K562 (cell line): ENCODE measurements at regions of chr1 and their contacts with region 1.

Region 1: DNA sequence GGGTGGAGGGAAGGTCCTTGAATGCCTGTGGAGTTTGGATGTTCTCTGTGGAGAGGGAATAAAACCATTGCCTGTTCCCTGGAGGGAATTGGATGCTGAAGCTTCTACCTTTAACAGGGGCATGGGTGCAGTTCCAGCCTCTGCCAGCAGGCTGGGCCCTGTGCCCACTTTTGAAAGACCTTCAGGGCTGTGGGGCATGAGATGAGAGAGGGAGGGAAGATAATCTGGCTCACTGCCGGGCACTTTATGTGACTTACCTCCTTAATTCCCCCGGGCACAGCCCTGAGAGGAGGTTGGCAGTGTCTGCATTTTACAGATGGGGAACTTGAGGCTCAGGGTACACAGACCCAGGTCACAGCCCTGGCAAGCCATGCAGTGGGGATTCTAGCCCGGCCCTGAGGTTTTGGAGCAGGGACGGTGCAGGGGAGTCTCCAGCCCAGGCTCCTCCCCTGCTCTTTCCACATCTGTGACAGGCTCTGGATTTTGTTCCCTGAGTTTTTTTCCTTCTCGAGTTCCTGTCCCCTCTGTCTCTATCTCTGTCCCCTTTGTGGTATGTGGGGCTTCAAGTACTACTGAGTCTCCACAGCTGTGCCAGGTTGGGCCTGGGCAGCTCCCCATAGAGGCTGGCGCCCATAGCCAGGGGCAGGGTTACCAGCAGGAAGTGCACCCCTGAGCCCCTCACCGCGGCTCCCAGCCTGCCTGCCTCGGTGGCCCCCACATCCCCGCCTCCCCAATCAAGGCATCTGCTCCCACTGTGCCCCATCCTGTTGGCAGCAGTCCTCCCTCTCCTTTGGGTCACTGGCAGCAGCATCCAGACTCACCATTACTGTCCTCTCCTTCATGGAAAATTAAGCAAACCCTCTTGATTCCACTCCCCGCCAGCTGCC is 14.0 kb upstream of the THEMIS2 start:
- DNase-seq: peak; percentile 69 to 90 (median 76)
- ATAC-seq: peak; percentile 92
- H3K4me3 ChIP-seq: no peak overlapping the region
- H3K27ac ChIP-seq: no peak overlapping the region
- H3K4me1 ChIP-seq: peaks cover 8 to 23% of the 10 kb centered on the region in 2 experiments; a peak in 4 of 5 replicates
- H3K27me3 ChIP-seq: no peaks in the 10 kb centered on the region
- CTCF ChIP-seq: peak; percentile 94 to 100 (median 99)
- EP300 ChIP-seq: peak; percentile 54; the same call in 1 of the 2 replicates
- POLR2A ChIP-seq: no peak
- RAD21 ChIP-seq: peak; percentile 98 to 99

Region 2: DNA sequence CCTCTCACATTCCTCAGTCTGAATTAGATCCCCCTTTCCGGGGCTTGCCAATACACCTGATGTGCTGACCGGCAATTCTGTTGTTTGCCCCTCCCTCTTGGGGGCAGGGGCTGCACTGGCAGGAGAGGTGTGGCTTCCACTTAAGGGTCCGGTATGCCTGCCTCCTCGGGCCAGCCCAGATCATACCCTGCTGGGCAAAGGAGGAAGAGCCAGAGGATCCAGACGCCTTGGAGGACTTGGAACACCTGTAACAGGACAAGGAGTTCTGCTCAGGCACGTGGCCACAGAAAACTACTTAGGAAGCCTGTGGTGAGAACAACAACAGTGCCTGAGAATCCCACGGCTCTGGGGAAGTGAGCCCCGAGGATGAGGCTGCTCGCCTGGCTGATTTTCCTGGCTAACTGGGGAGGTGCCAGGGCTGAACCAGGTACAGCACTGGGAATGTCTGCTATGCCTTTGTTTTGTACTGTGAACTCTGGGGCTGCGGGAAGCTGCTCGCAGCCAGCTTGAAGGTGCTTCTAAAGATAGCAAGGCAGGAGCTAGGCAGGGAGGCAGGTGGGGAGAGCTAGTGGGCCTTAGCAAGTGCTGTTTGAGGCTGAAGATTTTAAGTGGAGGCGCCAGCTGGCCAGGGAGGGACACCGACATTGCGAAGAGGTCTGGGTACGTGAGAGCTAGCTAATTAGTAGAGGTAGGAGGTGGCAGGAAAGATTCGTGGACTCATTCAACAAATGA is 76.7 kb after region 1 on chr1 and contains the start of gene SMPDL3B:
- CTCF ChIA-PET with region 1: no interaction called
- POLR2A ChIA-PET with region 1: no interaction called
- in situ Hi-C with region 1: no loop called
- intact Hi-C with region 1: loop called (anchors 5 kb)
- DNase-seq: peak in 3 of 4 experiments; percentile 52 to 60 (median 57)
- ATAC-seq: peak; percentile 76
- H3K4me3 ChIP-seq: peak within 1 kb of the TSS; percentile 3; the same call in 1 of the 2 replicates
- H3K27ac ChIP-seq: no peak within 1 kb of the TSS
- H3K4me1 ChIP-seq: peaks cover 8 to 18% of the 10 kb centered on the region in 2 experiments
- H3K27me3 ChIP-seq: no peaks in the 10 kb centered on the region
- CTCF ChIP-seq: no peak
- EP300 ChIP-seq: no peak
- POLR2A ChIP-seq: no peak
- RAD21 ChIP-seq: no peak
- polyA plus RNA-seq, gene SMPDL3B: 0.10 to 0.41 TPM

Region 3: GRCh38 chr1:27979151-27979858 is 121.0 kb after region 1 on chr1:
- CTCF ChIA-PET with region 1: interaction called, 44 read pairs
- POLR2A ChIA-PET with region 1: no interaction called
- in situ Hi-C with region 1: no loop called
- intact Hi-C with region 1: loop called (anchors 1 kb)
- DNase-seq: peak; percentile 67 to 90 (median 79)
- ATAC-seq: peak; percentile 93
- H3K4me3 ChIP-seq: no peak overlapping the region
- H3K27ac ChIP-seq: peak overlapping the region; percentile 81
- H3K4me1 ChIP-seq: peaks cover 5 to 18% of the 10 kb centered on the region in 2 experiments; a peak in 4 of 5 replicates
- H3K27me3 ChIP-seq: no peaks in the 10 kb centered on the region
- CTCF ChIP-seq: peak; percentile 66 to 96 (median 73); a peak in 5 of 6 replicates
- EP300 ChIP-seq: peak; percentile 95
- POLR2A ChIP-seq: no peak
- RAD21 ChIP-seq: peak; percentile 94 to 96

Region 4: DNA sequence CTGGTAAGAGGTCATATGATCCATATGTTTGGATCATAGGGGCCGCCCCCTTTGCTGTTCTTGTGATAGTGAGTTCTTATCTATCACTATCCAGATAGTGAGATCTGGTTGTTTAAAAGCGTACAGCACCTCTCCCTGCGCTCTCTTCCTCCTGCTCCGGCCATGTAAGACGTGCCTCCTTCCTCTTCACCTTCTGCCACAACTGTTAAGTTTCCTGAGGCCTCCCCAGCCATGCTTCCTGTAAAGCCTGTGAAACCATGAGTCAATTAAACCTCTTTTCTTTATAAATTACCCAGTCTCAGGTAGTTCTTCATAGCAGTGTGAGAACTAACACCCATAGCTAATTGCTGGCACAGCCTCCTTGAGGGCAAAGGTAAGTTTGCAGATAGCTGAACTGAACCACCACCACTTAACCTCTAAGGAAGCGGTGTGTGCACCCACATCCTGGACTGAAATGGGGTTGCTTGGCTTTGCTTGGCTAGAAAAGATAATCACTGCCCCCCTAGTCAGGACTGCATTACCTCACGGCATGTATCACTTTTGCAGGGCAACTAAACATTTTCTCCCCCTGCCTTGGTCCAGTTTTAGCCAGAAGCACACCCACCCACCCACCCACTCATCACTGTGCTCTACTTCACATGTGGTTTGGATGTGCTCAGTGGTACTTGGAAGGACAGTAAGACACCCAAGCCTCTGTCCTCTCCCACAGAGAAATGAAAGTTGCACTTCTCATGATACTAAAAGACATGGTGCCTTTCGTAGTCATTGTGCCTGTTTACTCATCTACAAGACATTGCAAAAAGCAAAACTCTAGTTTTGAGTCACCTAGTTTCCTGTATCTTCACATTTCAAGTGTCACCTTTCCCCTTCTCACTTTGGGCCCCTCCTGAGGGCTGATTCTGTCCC is 341.3 kb after region 1 on chr1:
- CTCF ChIA-PET with region 1: no interaction called
- POLR2A ChIA-PET with region 1: no interaction called
- in situ Hi-C with region 1: loop called (anchors 10 kb)
- intact Hi-C with region 1: no loop called
- DNase-seq: peak in 1 of 4 experiments; percentile 10
- ATAC-seq: no peak
- H3K4me3 ChIP-seq: no peak overlapping the region
- H3K27ac ChIP-seq: no peak overlapping the region
- H3K4me1 ChIP-seq: peaks cover 10 to 15% of the 10 kb centered on the region in 2 experiments; a peak in 4 of 5 replicates
- H3K27me3 ChIP-seq: no peaks in the 10 kb centered on the region
- CTCF ChIP-seq: no peak
- EP300 ChIP-seq: no peak
- POLR2A ChIP-seq: no peak
- RAD21 ChIP-seq: no peak

Region 5: GRCh38 chr1:28877132-28877781 is 1018.9 kb after region 1 on chr1:
- CTCF ChIA-PET with region 1: no interaction called
- POLR2A ChIA-PET with region 1: no interaction called
- in situ Hi-C with region 1: no loop called
- intact Hi-C with region 1: loop called (anchors 5 kb)
- DNase-seq: peak; percentile 81 to 92 (median 82)
- ATAC-seq: peak; percentile 85
- H3K4me3 ChIP-seq: no peak overlapping the region
- H3K27ac ChIP-seq: no peak overlapping the region
- H3K4me1 ChIP-seq: peaks cover 21 to 22% of the 10 kb centered on the region in 2 experiments
- H3K27me3 ChIP-seq: no peaks in the 10 kb centered on the region
- CTCF ChIP-seq: peak; percentile 94 to 99 (median 97)
- EP300 ChIP-seq: no peak
- POLR2A ChIP-seq: no peak
- RAD21 ChIP-seq: peak; percentile 95 to 98